Caco-2 (cell line): ENCODE measurements at regions of chr9 and their contacts with region 1.

Region 1: DNA sequence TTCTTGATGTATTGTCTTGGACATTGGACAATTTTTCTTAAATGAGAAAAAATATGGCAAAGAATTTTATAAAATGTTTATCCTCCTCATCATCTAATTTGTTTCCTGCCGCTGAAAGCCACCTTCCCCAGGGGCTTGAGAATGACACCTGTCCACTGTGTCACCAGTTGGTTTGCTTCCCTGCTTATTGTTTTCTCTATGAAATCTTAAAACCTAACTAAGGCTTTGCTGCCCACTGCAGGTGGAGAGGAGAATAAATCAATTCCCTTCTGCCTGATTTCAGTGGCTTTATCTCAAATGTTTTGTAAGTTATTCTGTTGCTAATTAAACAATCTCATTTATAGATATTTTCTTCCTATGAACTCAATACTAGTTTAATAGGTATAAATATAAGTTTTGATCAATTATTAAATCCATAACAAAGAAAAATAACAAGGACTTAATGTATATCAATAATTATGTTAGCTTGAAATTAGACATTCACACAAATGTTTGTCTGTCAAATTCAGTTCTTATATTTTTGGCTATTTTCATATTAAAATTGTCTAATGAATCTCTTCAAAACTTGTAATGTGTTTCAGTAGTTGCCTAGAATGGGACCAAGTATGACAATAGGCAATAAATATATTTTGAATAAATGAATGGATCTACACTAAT is 822.5 kb downstream of the PTPRD start:
- DNase-seq: peak in 1 of 2 experiments; percentile 20
- H3K4me3 ChIP-seq: no peak overlapping the region
- H3K4me3 Mint-ChIP-seq: no peak overlapping the region
- H3K27ac Mint-ChIP-seq: no peak overlapping the region
- H3K4me1 ChIP-seq: no peaks in the 10 kb centered on the region
- H3K4me1 Mint-ChIP-seq: no peaks in the 10 kb centered on the region
- H3K27me3 ChIP-seq: no peaks in the 10 kb centered on the region
- H3K27me3 Mint-ChIP-seq: no peaks in the 10 kb centered on the region
- CTCF ChIP-seq: peak in 1 of 2 experiments; percentile 45

Region 2: DNA sequence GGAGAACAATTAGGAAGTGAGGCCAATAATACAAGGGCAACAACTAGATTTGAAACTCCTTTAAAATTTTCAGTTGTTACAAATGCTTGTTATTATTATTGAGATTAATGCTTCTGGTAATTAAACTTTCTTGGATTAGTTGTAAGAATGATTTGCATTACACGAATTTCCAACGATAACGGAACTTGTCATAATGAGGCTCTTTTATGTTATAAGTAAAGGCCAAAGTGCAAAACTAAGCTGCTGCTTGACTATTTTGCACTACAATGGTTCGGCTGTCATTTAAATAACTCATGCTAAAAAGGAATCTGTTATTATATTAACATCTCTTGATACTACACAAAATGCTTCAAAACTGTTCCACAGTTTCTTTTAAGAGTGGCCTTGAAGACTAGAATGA is 184.7 kb before region 1 on chr9:
- CTCF ChIA-PET with region 1: no interaction called
- POLR2A ChIA-PET with region 1: no interaction called
- intact Hi-C with region 1: loop called (anchors 1 kb)
- DNase-seq: no peak
- H3K4me3 ChIP-seq: no peak overlapping the region
- H3K4me3 Mint-ChIP-seq: no peak overlapping the region
- H3K27ac Mint-ChIP-seq: no peak overlapping the region
- H3K4me1 ChIP-seq: no peaks in the 10 kb centered on the region
- H3K4me1 Mint-ChIP-seq: no peaks in the 10 kb centered on the region
- H3K27me3 ChIP-seq: no peaks in the 10 kb centered on the region
- H3K27me3 Mint-ChIP-seq: no peaks in the 10 kb centered on the region
- CTCF ChIP-seq: no peak

Region 3: DNA sequence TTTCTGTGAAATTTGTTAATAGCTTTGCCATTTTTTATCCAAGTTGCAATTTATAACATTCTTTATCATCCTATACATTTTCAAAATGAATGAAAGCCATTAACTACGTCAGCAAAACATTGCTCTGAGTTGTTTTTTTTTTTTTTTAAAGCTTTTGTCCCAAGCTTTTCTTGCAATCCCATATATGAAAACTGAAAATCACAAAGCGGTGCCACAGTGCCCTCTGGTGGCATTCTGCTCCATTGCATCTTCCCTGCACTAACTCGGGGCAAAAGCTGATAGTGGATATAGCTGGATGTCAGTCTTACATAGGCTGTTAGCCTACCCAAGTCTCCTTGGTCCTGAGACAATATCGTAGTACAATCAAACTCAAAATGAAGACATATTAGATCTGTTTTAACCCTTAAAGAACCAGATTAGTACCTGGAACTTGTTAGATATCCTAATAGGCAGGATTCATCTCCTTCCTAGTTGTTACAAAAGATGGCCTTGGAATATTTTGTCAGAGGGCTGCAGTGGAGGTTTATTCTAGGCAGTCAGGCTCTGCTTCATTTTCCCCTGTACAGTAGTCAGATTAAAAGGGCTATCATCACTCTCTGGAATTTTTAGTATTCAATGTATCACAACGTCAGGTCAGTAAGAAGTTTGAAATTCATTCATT is 152.6 kb after region 1 on chr9:
- CTCF ChIA-PET with region 1: interaction called, 11 read pairs
- POLR2A ChIA-PET with region 1: no interaction called
- intact Hi-C with region 1: loop called (anchors 5 kb)
- DNase-seq: peak; percentile 28 to 39
- H3K4me3 ChIP-seq: no peak overlapping the region
- H3K4me3 Mint-ChIP-seq: no peak overlapping the region
- H3K27ac Mint-ChIP-seq: no peak overlapping the region
- H3K4me1 ChIP-seq: no peaks in the 10 kb centered on the region
- H3K4me1 Mint-ChIP-seq: no peaks in the 10 kb centered on the region
- H3K27me3 ChIP-seq: no peaks in the 10 kb centered on the region
- H3K27me3 Mint-ChIP-seq: no peaks in the 10 kb centered on the region
- CTCF ChIP-seq: peak; percentile 25 to 63